Activated naive CD4-positive, alpha-beta T cell treated with anti-CD3 and anti-CD28 coated beads for 36 hours (primary cell): ENCODE measurements at regions of chr13 and their contacts with region 1.

Region 1: GRCh38 chr13:28792992-28793391 is 27.1 kb upstream of the MTUS2 start:
- DNase-seq: no peak
- H3K4me3 Mint-ChIP-seq: no peak overlapping the region
- H3K27ac Mint-ChIP-seq: no peak overlapping the region
- H3K4me1 Mint-ChIP-seq: no peaks in the 10 kb centered on the region
- H3K27me3 Mint-ChIP-seq: peaks cover 13% of the 10 kb centered on the region

Region 2: DNA sequence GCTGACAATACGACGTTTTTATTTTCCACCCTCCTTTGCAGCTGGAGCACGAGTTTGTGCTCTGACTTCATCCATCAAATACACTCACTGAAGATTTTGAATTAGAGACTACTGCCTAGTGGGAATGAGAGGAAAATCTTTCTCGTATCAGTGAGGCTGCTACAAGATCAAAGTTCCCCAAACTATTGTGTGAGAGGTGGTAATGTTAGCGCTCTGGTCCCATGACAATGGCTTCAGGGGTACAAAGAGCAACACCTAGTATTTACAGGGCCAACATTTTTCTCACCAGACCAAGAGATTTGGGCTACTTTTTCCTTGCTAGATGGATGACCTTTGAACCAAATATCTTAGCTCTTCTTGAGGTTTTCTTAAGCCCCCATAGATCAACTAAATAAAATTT is 903.5 kb before region 1 on chr13:
- CTCF ChIA-PET with region 1: no interaction called
- intact Hi-C with region 1: no loop called
- DNase-seq: no peak
- H3K4me3 Mint-ChIP-seq: no peak overlapping the region
- H3K27ac Mint-ChIP-seq: no peak overlapping the region
- H3K4me1 Mint-ChIP-seq: no peaks in the 10 kb centered on the region
- H3K27me3 Mint-ChIP-seq: peaks cover 23% of the 10 kb centered on the region

Region 3: GRCh38 chr13:28058866-28059624 is 733.9 kb before region 1 on chr13:
- CTCF ChIA-PET with region 1: no interaction called
- intact Hi-C with region 1: loop called (anchors 5 kb)
- DNase-seq: peak; percentile 72
- H3K4me3 Mint-ChIP-seq: no peak overlapping the region
- H3K27ac Mint-ChIP-seq: no peak overlapping the region
- H3K4me1 Mint-ChIP-seq: no peaks in the 10 kb centered on the region
- H3K27me3 Mint-ChIP-seq: peaks cover 3% of the 10 kb centered on the region

Region 4: DNA sequence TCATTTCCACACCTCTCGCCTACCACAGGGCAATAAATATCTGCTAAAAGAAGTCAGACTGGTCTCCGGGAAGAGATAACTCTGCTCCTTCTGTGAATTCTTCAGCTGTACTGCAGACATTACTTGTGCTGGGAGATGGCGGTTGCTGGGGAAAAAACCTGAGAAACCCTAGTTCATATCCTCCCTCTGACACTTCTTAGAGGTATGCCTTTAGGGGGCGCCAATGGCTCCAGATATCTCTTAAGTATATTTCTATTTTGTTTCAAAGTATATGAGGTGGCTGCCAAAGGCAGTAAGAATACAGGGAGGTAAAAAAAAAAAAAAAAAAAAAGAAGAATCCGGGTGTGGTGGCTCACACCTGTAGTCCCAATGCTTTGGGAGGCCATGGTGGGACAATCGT is 479.4 kb before region 1 on chr13:
- CTCF ChIA-PET with region 1: no interaction called
- intact Hi-C with region 1: loop called (anchors 1 kb)
- DNase-seq: peak; percentile 62
- H3K4me3 Mint-ChIP-seq: no peak overlapping the region
- H3K27ac Mint-ChIP-seq: no peak overlapping the region
- H3K4me1 Mint-ChIP-seq: no peaks in the 10 kb centered on the region
- H3K27me3 Mint-ChIP-seq: no peaks in the 10 kb centered on the region

Region 5: GRCh38 chr13:28324181-28324789 is 468.7 kb before region 1 on chr13:
- CTCF ChIA-PET with region 1: interaction called, 5 read pairs
- intact Hi-C with region 1: loop called (anchors 1 kb)
- DNase-seq: peak; percentile 79
- H3K4me3 Mint-ChIP-seq: no peak overlapping the region
- H3K27ac Mint-ChIP-seq: no peak overlapping the region
- H3K4me1 Mint-ChIP-seq: no peaks in the 10 kb centered on the region
- H3K27me3 Mint-ChIP-seq: no peaks in the 10 kb centered on the region

Region 6: DNA sequence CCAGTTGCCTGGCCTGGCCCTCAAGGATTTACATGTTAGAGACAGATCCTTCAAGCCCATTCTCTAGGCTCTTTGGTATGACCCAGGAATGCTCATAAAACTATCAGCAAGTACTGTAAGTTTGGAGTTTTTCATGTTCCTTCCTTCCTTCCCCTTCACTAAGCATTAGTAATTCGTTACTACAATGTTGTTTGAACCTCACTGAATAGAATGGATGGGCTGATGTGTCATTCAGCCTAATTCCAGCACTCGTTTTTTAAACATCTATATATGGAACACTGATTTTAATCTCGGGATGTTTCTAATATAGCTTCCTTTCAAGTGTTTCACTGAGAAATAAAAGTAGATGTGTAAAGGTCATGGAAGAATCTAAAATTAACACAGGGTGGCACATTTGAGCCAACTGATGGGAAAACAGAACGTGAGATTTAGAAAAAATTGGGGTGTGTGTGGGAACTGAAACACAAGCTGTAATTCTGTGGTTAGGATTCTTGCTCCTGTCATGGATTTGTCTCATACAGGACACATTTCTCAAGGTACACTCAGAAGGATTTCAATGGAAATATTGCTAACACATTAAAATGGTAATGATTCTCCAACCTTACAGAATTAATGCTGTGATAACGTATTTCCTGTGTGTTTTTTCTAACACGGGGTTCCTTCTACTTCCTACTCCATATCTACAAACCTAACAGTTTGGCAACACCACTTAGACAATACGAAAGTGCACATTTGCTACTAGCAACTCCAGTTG is 391.5 kb before region 1 on chr13:
- CTCF ChIA-PET with region 1: interaction called, 3 read pairs
- intact Hi-C with region 1: loop called (anchors 10 kb)
- DNase-seq: no peak
- H3K4me3 Mint-ChIP-seq: no peak overlapping the region
- H3K27ac Mint-ChIP-seq: no peak overlapping the region
- H3K4me1 Mint-ChIP-seq: peaks cover 8% of the 10 kb centered on the region
- H3K27me3 Mint-ChIP-seq: no peaks in the 10 kb centered on the region

Region 7: GRCh38 chr13:28679628-28680027 is 113.4 kb before region 1 on chr13:
- CTCF ChIA-PET with region 1: interaction called, 4 read pairs
- intact Hi-C with region 1: loop called (anchors 2 kb)
- DNase-seq: no peak
- H3K4me3 Mint-ChIP-seq: no peak overlapping the region
- H3K27ac Mint-ChIP-seq: no peak overlapping the region
- H3K4me1 Mint-ChIP-seq: no peaks in the 10 kb centered on the region
- H3K27me3 Mint-ChIP-seq: no peaks in the 10 kb centered on the region

Region 8: GRCh38 chr13:28718543-28719226 is 74.3 kb before region 1 on chr13 and contains the start of gene SLC46A3:
- CTCF ChIA-PET with region 1: no interaction called
- intact Hi-C with region 1: loop called (anchors 2 kb)
- DNase-seq: peak; percentile 98
- H3K4me3 Mint-ChIP-seq: peak within 1 kb of the TSS; percentile 94
- H3K27ac Mint-ChIP-seq: peak within 1 kb of the TSS; percentile 86
- H3K4me1 Mint-ChIP-seq: peaks cover 22% of the 10 kb centered on the region
- H3K27me3 Mint-ChIP-seq: no peaks in the 10 kb centered on the region
- total RNA-seq, gene SLC46A3: 2.2 to 3.2 TPM